ENCODE measurements at regions of chr17 and their contacts with region 1.

Region 1: DNA sequence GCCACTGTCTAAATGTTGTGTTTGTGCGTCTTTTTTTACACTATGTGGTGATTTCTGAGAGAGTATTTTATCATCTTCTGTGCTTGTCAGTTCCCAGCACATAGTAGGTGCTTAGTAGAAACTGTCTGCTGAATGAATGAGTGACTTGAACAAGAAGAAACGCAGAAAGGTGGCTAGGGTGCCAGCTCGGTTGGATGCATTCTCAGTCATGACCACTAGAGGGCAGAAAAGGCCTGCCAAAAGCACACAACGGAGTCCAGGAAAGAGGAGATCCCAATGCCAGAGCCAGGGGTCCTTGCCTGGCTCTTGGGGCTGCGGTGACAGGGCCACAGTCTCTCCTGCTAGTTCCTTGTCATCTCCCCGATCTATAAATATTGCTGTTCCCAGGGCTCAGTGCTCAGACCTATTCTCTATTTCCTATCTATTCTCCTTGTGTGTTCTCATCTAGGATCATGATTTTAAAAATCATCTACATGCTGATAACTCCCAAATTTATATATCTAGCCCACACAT is 57.3 kb upstream of the CCL1 start:
- DNase-seq: no peak

Region 2: GRCh38 chr17:34519282-34519681 is 99.0 kb after region 1 on chr17:
- intact Hi-C with region 1: loop called (anchors 5 kb)
- DNase-seq: no peak

Region 3: DNA sequence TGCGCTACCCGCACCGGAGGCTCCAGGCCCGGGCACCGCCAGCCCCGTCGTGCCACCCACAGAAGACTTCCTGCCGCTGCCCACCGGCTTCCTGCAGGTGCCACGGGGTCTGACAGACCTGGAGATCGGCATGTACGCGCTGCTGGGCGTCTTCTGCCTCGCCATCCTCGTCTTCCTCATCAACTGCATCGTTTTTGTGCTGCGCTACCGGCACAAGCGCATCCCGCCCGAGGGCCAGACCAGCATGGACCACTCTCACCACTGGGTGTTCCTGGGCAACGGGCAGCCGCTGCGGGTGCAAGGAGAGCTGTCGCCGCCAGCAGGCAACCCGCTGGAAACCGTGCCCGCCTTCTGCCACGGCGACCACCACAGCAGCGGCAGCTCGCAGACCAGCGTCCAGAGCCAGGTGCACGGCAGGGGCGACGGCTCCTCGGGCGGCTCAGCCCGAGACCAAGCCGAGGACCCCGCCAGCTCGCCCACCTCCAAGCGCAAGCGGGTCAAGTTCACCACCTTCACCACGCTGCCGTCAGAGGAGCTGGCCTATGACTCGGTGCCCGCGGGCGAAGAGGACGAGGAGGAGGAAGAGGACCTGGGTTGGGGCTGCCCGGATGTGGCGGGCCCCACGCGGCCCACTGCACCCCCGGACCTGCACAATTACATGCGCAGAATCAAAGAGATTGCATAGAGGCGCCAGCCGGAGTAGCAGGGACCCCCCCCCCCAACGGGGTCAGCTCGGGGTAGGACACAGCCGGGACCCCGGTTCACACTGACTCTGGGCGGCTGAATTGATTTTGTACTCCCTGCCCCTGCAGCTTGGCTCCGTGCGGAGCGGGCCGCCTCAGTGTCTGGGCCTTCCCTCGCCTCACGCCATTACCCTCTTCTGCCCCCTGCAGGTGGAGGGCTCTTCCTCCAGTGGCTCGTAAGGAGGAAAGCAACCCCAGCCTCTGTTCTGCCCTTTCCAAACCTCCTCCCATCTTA is 217.5 kb after region 1 on chr17:
- intact Hi-C with region 1: loop called (anchors 2 kb)
- DNase-seq: peak; percentile 85

Region 4: GRCh38 chr17:34988644-34989043 is 568.3 kb after region 1 on chr17:
- intact Hi-C with region 1: loop called (anchors 5 kb)
- DNase-seq: no peak

Measured in cardiac septum (tissue), 1 donor.